ENCODE measurements at regions of chr7 and their contacts with region 1.

Region 1: GRCh38 chr7:76393116-76394031 is 16.1 kb downstream of the SSC4D start:
- DNase-seq: peak; percentile 91
- H3K4me3 Mint-ChIP-seq: peak overlapping the region; percentile 81
- H3K27ac Mint-ChIP-seq: peak overlapping the region; percentile 88
- H3K4me1 Mint-ChIP-seq: peaks cover 37% of the 10 kb centered on the region
- H3K27me3 Mint-ChIP-seq: no peaks in the 10 kb centered on the region

Region 2: DNA sequence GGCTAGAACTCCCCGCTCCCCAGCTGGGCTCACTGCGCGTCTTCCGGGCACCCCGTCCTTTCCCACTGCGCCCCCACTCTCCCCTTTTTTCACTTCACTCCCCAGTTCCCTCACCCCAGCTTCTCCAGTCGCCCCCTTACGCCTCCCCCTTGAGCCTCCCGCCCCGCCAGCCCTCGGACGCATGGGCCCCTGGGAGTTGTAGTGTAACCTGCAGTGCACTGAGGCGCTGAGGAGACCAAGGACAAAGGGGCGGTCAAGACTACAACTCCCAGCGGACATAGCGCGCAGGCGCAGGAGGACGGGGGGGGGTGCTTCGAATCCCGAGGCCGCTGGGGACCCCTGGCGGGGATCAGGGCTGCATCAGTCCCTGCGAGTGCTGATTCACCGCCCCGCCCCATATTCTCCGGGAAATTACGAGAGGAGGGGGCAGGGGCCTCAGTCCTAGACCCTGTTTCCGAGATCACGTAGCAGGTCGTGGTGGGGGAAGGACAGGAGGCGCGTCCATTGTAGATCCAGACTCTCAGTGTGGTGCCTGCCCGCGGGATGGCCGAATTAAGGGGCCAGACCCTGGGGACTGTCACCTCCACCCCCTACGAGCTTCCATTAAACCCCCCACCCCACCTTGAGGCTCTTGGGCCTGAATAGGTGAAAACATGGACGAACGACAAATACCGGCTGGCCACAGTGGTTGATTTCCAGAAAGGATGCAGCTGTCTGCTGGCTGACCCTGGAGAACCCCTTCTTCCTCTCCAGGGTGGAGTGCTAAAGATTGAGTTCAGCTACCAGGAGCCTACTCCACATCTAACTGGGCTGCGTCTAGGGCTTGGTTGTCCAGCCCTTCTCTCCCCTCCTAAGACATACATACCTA is 34.0 kb before region 1 on chr7:
- CTCF ChIA-PET with region 1: interaction called, 5 read pairs
- POLR2A ChIA-PET with region 1: interaction called, 13 read pairs
- DNase-seq: peak; percentile 97
- H3K4me3 Mint-ChIP-seq: peak overlapping the region; percentile 93
- H3K27ac Mint-ChIP-seq: peak overlapping the region; percentile 93
- H3K4me1 Mint-ChIP-seq: peaks cover 51% of the 10 kb centered on the region
- H3K27me3 Mint-ChIP-seq: no peaks in the 10 kb centered on the region

Region 3: GRCh38 chr7:76403780-76404494 is 10.6 kb after region 1 on chr7:
- CTCF ChIA-PET with region 1: no interaction called
- POLR2A ChIA-PET with region 1: no interaction called
- DNase-seq: no peak
- H3K4me3 Mint-ChIP-seq: no peak overlapping the region
- H3K27ac Mint-ChIP-seq: no peak overlapping the region
- H3K4me1 Mint-ChIP-seq: peaks cover 5% of the 10 kb centered on the region
- H3K27me3 Mint-ChIP-seq: no peaks in the 10 kb centered on the region

Measured in activated CD4-positive, alpha-beta memory T cell treated with anti-CD3 and anti-CD28 coated beads, Interleukin-2, amount 10 ng/mL, durations not matched to agents 7 days and 5 days (primary cell).